Naive thymus-derived CD4-positive, alpha-beta T cell (primary cell): ENCODE measurements at regions of chr6 and their contacts with region 1.

Region 1: GRCh38 chr6:108874470-108875160 is 26.4 kb downstream of the ARMC2 start:
- DNase-seq: peak in 1 of 9 donors; percentile 66
- ATAC-seq: peak; percentile 79
- H3K4me3 ChIP-seq: no peak overlapping the region
- H3K4me3 Mint-ChIP-seq: peak overlapping the region in 8 of 10 donors; percentile 25 to 79 (median 43)
- H3K27ac ChIP-seq: peak overlapping the region; percentile 22
- H3K27ac Mint-ChIP-seq: peak overlapping the region in 7 of 9 donors; percentile 6 to 92 (median 53)
- H3K4me1 ChIP-seq: peaks cover 9 to 41% of the 10 kb centered on the region in 2 donors
- H3K4me1 Mint-ChIP-seq: peaks cover 25 to 63% (median 31%) of the 10 kb centered on the region in 7 donors
- H3K27me3 ChIP-seq: no peaks in the 10 kb centered on the region
- H3K27me3 Mint-ChIP-seq: peaks cover 0 to 29% (median 0%) of the 10 kb centered on the region in 5 donors

Region 2: GRCh38 chr6:108598305-108598863 is 276.2 kb before region 1 on chr6:
- CTCF ChIA-PET with region 1: no interaction called
- POLR2A ChIA-PET with region 1: no interaction called
- intact Hi-C with region 1: no loop called
- DNase-seq: no peak
- ATAC-seq: peak; percentile 64
- H3K4me3 ChIP-seq: no peak overlapping the region
- H3K4me3 Mint-ChIP-seq: no peak overlapping the region
- H3K27ac ChIP-seq: no peak overlapping the region
- H3K27ac Mint-ChIP-seq: peak overlapping the region in 1 of 9 donors; percentile 7
- H3K4me1 ChIP-seq: peaks cover 0 to 5% of the 10 kb centered on the region in 2 donors
- H3K4me1 Mint-ChIP-seq: peaks cover 8 to 55% (median 43%) of the 10 kb centered on the region in 7 donors
- H3K27me3 ChIP-seq: no peaks in the 10 kb centered on the region
- H3K27me3 Mint-ChIP-seq: peaks cover 0 to 7% (median 0%) of the 10 kb centered on the region in 5 donors

Region 3: DNA sequence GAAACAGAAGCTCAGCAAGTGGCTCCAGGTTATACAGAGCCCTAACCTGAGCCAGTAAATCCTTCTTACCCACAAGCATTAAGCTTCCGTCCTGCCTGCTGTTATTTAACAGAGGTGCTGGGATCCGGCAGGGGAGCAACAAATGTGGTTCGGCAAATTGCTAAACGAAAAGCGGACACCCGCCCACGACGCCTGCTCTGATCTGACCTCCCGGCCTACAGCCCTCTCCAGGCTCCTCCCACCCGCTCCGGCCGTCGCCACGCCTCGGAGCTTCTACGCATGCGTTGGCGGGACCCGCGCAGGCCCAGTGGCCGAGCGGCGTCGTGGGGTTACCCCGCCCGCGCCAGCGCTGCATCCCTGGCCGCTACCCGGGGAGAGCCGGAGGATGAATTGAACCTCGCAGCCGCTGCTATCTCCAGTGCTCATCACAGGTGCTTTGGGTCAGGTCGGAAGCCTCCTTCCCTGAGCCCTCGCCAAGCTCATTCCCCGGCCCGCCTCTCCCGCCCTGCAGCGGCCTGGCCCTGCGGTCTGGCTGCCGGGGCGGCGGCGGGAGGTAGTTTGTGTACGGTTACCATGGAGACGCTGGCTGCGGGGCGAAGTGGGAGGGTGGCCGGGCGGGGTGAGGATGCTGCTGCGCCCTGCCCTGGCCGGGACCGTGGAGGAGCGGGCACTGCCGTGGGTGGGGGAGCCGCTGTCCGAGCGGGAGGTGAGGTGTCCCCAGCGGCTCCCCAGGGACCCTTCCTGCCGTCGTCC is 26.3 kb before region 1 on chr6 and contains the start of gene ARMC2:
- CTCF ChIA-PET with region 1: no interaction called
- POLR2A ChIA-PET with region 1: interaction called, 4 read pairs
- intact Hi-C with region 1: loop called in 1 of 2 experiments (anchors 1 kb)
- DNase-seq: peak; percentile 72 to 95 (median 79)
- ATAC-seq: peak; percentile 94
- H3K4me3 ChIP-seq: peak within 1 kb of the TSS; percentile 90
- H3K4me3 Mint-ChIP-seq: peak within 1 kb of the TSS; percentile 75 to 93 (median 88)
- H3K27ac ChIP-seq: peak within 1 kb of the TSS; percentile 69
- H3K27ac Mint-ChIP-seq: peak within 1 kb of the TSS; percentile 72 to 93 (median 85)
- H3K4me1 ChIP-seq: peaks cover 6 to 13% of the 10 kb centered on the region in 2 donors
- H3K4me1 Mint-ChIP-seq: peaks cover 11 to 39% (median 29%) of the 10 kb centered on the region in 7 donors
- H3K27me3 ChIP-seq: no peaks in the 10 kb centered on the region
- H3K27me3 Mint-ChIP-seq: peaks cover 0 to 36% (median 0%) of the 10 kb centered on the region in 5 donors
- total RNA-seq, gene ARMC2: 6.2 to 12.7 (median 7.9) TPM

Region 4: DNA sequence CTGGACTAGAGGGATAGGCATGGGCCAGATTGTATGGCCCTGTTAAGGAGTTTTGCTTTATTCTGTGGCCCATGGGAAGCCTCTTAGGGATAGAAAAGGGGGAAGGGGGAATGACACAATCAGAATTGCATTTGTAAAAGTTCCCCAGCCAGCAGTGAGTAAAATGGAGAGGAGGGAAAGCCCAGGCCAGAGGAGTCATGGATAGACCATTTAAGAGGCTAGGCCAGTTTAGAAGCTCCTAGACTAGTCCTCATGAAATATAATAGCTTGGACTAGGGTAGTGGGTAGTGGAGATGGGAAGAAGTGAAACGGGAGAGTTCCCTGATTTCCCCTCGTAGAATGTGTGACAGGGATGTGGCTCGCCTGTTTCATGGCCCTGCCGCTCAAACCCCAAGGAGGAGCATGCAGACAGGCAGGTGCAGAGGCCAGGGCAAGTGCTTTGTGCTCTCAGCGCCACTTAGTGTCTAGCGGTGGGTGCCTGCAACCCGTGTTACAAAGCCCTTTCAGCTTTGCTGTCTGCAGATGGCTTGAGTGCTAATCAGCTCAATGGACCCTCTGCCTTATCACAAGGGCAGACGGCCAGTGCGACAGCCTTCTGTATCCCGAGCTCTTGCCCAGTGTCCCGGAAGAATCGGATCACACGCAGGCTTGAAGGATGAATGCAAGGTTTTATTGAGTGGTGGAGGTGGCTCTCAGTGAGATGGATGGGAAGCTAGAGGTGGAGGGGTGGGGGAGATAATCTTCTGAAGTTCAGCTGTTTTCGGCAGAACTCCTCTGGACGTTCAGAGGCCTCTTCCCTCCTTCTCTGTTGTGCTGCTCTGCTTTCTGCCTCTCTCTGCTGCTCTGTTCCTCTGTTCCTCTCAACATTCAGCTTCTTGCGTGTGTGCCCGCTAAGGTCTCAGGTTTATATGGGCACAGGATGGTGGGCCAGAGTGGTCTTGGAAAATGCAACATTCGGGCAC is 361.8 kb after region 1 on chr6:
- CTCF ChIA-PET with region 1: no interaction called
- POLR2A ChIA-PET with region 1: no interaction called
- intact Hi-C with region 1: loop called in 1 of 2 experiments (anchors 5 kb)
- DNase-seq: peak in 3 of 9 donors; percentile 12 to 34 (median 32)
- ATAC-seq: peak; percentile 56
- H3K4me3 ChIP-seq: no peak overlapping the region
- H3K4me3 Mint-ChIP-seq: peak overlapping the region; percentile 0 to 73 (median 26)
- H3K27ac ChIP-seq: no peak overlapping the region
- H3K27ac Mint-ChIP-seq: peak overlapping the region in 8 of 9 donors; percentile 2 to 90 (median 42)
- H3K4me1 ChIP-seq: no peaks in the 10 kb centered on the region
- H3K4me1 Mint-ChIP-seq: peaks cover 6 to 25% (median 18%) of the 10 kb centered on the region in 7 donors
- H3K27me3 ChIP-seq: no peaks in the 10 kb centered on the region
- H3K27me3 Mint-ChIP-seq: peaks cover 0 to 3% (median 0%) of the 10 kb centered on the region in 5 donors

Region 5: DNA sequence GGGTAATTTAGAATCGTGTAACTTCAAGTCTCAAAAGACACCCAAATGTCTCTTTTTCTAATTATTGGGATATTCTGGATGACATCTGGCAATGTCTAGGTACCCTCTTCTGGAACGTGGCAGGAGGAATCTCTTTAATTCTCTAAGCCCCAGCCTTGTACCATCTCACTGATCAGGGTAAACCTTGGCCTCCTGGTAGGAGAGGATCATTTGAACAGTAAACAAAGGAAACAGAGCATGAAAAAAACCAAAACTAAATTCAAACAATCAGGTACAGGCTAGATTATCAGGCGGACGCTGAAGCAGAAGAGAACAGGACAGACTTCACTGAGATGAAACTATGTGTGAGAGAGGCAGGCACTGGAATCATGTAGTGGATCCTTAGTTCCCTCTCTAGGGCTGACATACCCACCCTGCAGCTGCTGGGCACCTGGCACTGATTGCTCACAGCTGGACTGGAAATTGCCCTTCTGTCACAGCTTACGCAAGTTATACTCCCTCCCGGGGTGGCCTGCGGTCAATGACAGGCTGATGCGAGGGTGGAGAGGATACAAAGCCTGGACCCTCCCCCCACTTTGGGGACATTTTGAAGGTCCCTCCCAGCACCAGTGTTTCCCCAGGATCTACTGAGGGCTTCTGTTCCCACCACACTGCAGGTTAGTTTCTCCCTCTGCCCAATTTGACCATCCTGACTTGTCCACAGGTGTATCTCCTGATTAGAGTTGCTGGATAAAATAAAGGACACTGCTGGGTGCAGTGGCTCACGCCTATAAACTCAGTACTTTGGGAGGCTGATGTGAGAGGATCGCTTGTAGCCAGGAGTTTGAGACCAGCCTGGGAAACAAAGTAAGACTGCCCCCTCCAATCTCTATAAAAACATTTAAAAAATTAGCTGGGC is 629.0 kb after region 1 on chr6:
- CTCF ChIA-PET with region 1: no interaction called
- POLR2A ChIA-PET with region 1: no interaction called
- intact Hi-C with region 1: no loop called
- DNase-seq: no peak
- ATAC-seq: no peak
- H3K4me3 ChIP-seq: no peak overlapping the region
- H3K4me3 Mint-ChIP-seq: no peak overlapping the region
- H3K27ac ChIP-seq: no peak overlapping the region
- H3K27ac Mint-ChIP-seq: no peak overlapping the region
- H3K4me1 ChIP-seq: no peaks in the 10 kb centered on the region
- H3K4me1 Mint-ChIP-seq: peaks cover 0 to 8% (median 5%) of the 10 kb centered on the region in 7 donors
- H3K27me3 ChIP-seq: no peaks in the 10 kb centered on the region
- H3K27me3 Mint-ChIP-seq: peaks cover 0 to 24% (median 0%) of the 10 kb centered on the region in 5 donors